ENCODE measurements at regions of chr7 and their contacts with region 1.

Region 1: GRCh38 chr7:23013715-23014649 is at the start of gene HYCC1:
- DNase-seq: peak; percentile 98
- ATAC-seq: peak; percentile 98
- H3K4me3 ChIP-seq: peak within 1 kb of the TSS; percentile 88
- H3K27ac ChIP-seq: no peak within 1 kb of the TSS
- H3K4me1 ChIP-seq: peaks cover 21% of the 10 kb centered on the region
- H3K27me3 ChIP-seq: no peaks in the 10 kb centered on the region
- CTCF ChIP-seq: peak; percentile 57
- total RNA-seq, gene HYCC1: 15.0 and 15.5 TPM in 2 replicates

Region 2: GRCh38 chr7:22822486-22823141 is 191.4 kb before region 1 on chr7 and contains the start of gene TOMM7:
- CTCF ChIA-PET with region 1: no interaction called
- POLR2A ChIA-PET with region 1: no interaction called
- intact Hi-C with region 1: loop called (anchors 2 kb)
- DNase-seq: peak; percentile 96
- ATAC-seq: peak; percentile 78
- H3K4me3 ChIP-seq: peak within 1 kb of the TSS; percentile 89
- H3K27ac ChIP-seq: peak within 1 kb of the TSS; percentile 42
- H3K4me1 ChIP-seq: peaks cover 31% of the 10 kb centered on the region
- H3K27me3 ChIP-seq: no peaks in the 10 kb centered on the region
- CTCF ChIP-seq: no peak
- total RNA-seq, gene TOMM7: 132 and 151 TPM in 2 replicates

Region 3: GRCh38 chr7:22854158-22855048 is 159.6 kb before region 1 on chr7:
- CTCF ChIA-PET with region 1: no interaction called
- POLR2A ChIA-PET with region 1: no interaction called
- intact Hi-C with region 1: loop called (anchors 1 kb)
- DNase-seq: peak; percentile 86
- ATAC-seq: peak; percentile 72
- H3K4me3 ChIP-seq: peak overlapping the region; percentile 87
- H3K27ac ChIP-seq: peak overlapping the region; percentile 79
- H3K4me1 ChIP-seq: peaks cover 38% of the 10 kb centered on the region
- H3K27me3 ChIP-seq: no peaks in the 10 kb centered on the region
- CTCF ChIP-seq: no peak

Region 4: GRCh38 chr7:22934473-22935065 is 79.4 kb before region 1 on chr7:
- CTCF ChIA-PET with region 1: no interaction called
- POLR2A ChIA-PET with region 1: no interaction called
- intact Hi-C with region 1: loop called (anchors 5 kb)
- DNase-seq: no peak
- ATAC-seq: no peak
- H3K4me3 ChIP-seq: no peak overlapping the region
- H3K27ac ChIP-seq: no peak overlapping the region
- H3K4me1 ChIP-seq: no peaks in the 10 kb centered on the region
- H3K27me3 ChIP-seq: no peaks in the 10 kb centered on the region
- CTCF ChIP-seq: no peak

Region 5: GRCh38 chr7:22980422-22980821 is 33.6 kb before region 1 on chr7:
- CTCF ChIA-PET with region 1: no interaction called
- POLR2A ChIA-PET with region 1: interaction called, 3 read pairs
- intact Hi-C with region 1: loop called (anchors 1 kb)
- DNase-seq: peak; percentile 62
- ATAC-seq: peak; percentile 76
- H3K4me3 ChIP-seq: no peak overlapping the region
- H3K27ac ChIP-seq: peak overlapping the region; percentile 78
- H3K4me1 ChIP-seq: peaks cover 36% of the 10 kb centered on the region
- H3K27me3 ChIP-seq: no peaks in the 10 kb centered on the region
- CTCF ChIP-seq: no peak

Region 6: GRCh38 chr7:23043441-23043840 is 29.5 kb after region 1 on chr7:
- CTCF ChIA-PET with region 1: no interaction called
- POLR2A ChIA-PET with region 1: no interaction called
- intact Hi-C with region 1: no loop called
- DNase-seq: peak; percentile 53
- ATAC-seq: peak; percentile 75
- H3K4me3 ChIP-seq: no peak overlapping the region
- H3K27ac ChIP-seq: no peak overlapping the region
- H3K4me1 ChIP-seq: no peaks in the 10 kb centered on the region
- H3K27me3 ChIP-seq: no peaks in the 10 kb centered on the region
- CTCF ChIP-seq: no peak